Adrenal gland (tissue), 19 donors: ENCODE measurements at regions of chr4 and their contacts with region 1.

Region 1: DNA sequence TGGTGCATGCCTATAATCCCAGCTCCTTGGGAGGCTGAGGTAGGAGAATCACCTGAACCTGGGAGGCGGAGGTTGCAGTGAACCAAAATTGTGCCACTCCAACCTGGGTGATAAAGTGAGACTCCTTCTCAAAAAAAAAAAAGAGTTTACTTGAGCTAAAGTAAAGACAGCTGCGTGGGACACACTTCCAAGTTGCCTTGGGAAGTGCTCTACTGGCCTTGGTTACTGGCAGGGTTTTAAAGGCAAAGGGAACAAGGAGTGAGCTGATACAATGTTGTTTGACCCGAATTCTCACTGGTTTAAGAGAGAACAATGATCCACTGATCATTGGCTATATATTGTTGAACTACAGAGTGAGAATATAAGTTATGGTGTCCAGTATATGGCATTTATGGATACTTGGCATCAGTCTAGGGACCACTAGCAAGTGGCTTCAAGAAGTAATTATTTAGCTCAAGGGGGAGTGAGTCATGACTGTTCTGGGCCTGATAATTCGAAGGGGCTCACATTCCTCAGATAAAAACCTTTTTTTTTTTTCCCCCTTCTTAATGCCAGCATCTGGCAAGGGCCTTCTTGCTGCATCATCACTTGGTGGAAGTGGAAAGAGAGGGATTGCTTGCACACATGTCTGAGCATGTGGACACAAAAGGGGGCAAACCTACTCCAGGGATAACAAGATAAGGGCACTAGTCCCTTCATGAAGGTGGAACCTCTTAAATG is 32.3 kb downstream of the GRK4 start:
- DNase-seq: no peak
- H3K4me3 ChIP-seq: no peak overlapping the region
- H3K27ac ChIP-seq: no peak overlapping the region
- H3K4me1 ChIP-seq: no peaks in the 10 kb centered on the region
- H3K27me3 ChIP-seq: no peaks in the 10 kb centered on the region
- CTCF ChIP-seq: no peak
- POLR2A ChIP-seq: no peak

Region 2: GRCh38 chr4:2930758-2931554 is 64.8 kb before region 1 on chr4:
- intact Hi-C with region 1: no loop called
- DNase-seq: peak in 3 of 7 donors; percentile 20 to 53 (median 35)
- H3K4me3 ChIP-seq: no peak overlapping the region
- H3K27ac ChIP-seq: peak overlapping the region in 1 of 5 donors; percentile 95
- H3K4me1 ChIP-seq: peaks cover 11 to 18% of the 10 kb centered on the region in 2 donors
- H3K27me3 ChIP-seq: no peaks in the 10 kb centered on the region
- CTCF ChIP-seq: no peak
- POLR2A ChIP-seq: no peak

Region 3: DNA sequence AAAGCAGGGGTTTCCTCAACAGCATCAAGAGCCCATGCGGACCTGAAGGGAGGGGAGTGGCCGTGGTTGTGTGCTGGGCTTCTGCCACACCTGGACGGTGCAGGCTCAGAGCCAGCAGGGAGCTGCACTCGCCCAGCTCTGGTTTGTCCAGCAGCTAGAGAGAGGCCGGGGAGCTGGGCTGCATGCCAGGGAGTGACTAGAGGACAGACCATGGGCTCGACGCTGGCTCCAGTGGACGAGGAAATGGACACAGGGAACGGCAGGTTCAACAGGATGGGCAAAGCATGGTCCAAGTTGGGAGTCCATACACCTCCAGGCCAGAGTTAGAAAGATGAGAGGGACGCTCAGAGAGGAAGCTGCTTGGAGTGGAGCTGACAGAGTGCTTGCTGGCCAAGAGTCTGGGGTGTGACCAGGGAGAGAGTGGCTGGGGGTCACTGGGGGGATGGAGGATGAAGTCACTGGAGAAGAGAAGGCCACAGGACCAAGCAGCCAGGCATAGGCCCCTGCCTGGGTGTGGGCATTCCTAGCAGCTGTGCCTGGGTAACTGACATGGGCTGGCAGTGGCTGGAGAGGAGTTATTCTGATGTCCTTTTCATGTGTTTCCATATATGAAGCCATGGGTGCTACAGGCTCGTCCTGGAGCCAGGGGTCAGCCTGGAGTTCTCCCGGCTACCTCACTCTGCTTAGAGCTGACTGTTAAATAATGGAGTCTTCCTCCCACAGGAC is 35.8 kb after region 1 on chr4:
- intact Hi-C with region 1: no loop called
- DNase-seq: peak in 3 of 7 donors; percentile 25 to 48 (median 43)
- H3K4me3 ChIP-seq: no peak overlapping the region
- H3K27ac ChIP-seq: no peak overlapping the region
- H3K4me1 ChIP-seq: no peaks in the 10 kb centered on the region
- H3K27me3 ChIP-seq: no peaks in the 10 kb centered on the region
- CTCF ChIP-seq: no peak
- POLR2A ChIP-seq: no peak

Region 4: DNA sequence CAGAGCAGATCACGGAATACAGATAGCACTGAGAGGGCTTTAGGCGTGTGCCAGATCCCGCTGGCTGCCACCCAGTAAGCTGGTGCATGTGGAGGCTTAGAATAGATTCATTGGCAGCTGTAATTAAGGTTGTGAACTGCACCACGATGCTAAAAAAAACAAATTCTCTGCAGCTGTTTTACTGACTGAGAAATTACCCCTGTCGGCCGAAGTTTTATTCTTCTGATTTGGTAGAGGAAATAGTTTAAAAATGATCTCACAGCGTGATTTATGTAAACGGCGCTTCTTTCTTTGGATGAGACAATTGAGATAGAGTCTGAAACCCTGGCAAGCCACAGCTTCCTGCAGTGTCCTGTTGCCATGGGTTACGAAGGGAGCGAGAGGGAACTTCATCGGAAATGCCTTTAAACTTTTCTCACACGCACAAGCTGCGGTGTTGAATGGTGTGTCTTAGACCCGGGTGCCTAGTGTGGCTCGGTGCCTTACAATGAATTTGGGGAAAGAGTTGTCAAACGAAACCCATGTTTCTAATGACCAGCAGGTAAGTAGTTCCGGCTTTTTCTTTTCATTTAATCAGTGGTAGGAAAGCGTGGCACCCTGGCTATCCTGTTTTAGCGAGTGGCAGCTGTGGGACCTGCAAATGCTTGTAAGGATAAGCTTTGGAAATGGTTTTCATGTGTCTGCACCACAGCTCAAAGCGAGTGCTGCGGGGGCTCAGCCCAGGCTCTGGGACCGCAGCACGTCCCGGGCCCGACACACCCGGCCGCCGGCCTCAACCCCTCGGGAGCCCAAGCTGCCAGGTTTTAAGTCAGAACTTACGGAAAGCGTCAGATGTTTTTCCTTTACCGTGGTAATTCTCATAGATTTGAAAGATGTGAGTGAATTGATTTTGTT is 374.3 kb after region 1 on chr4:
- intact Hi-C with region 1: no loop called
- DNase-seq: peak in 4 of 7 donors; percentile 49 to 74 (median 57)
- H3K4me3 ChIP-seq: peak overlapping the region in 1 of 4 donors; percentile 36
- H3K27ac ChIP-seq: peak overlapping the region in 1 of 5 donors; percentile 61
- H3K4me1 ChIP-seq: peaks cover 0 to 39% of the 10 kb centered on the region in 2 donors
- H3K27me3 ChIP-seq: no peaks in the 10 kb centered on the region
- CTCF ChIP-seq: no peak
- POLR2A ChIP-seq: no peak

Region 5: DNA sequence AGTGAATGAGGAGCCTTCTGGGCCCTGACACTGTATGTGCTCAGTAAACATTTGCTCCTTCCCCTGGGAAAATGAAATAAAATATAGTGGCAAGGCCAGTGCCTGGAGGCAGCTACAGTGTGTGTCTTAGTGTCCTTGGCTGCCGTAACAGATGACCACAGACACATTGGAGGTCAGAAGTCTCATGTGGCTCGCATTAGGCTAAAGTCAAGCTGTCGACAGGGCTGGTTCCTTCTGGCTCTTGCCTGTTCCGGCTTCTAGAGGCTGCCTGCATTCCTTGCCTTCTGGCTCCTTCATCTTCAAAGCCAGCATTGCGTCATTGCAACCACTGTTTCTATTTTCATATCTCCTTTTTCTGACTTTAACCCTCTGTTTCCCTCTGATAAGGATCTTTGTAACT is 1629.8 kb after region 1 on chr4:
- intact Hi-C with region 1: loop called in 1 of 2 experiments (anchors 10 kb)
- DNase-seq: peak in 1 of 7 donors; percentile 6
- H3K4me3 ChIP-seq: no peak overlapping the region
- H3K27ac ChIP-seq: no peak overlapping the region
- H3K4me1 ChIP-seq: no peaks in the 10 kb centered on the region
- H3K27me3 ChIP-seq: no peaks in the 10 kb centered on the region
- CTCF ChIP-seq: no peak
- POLR2A ChIP-seq: no peak